Dorsolateral prefrontal cortex (tissue), 120 donors: ENCODE measurements at regions of chr10 and their contacts with region 1.

Region 1: GRCh38 chr10:118669020-118669791 is 73.8 kb upstream of the PRLHR start:
- DNase-seq: peak in 6 of 10 donors; percentile 61 to 81 (median 68)
- H3K4me3 ChIP-seq: peak overlapping the region in 51 of 59 donors; percentile 3 to 61 (median 29)
- H3K27ac ChIP-seq: peak overlapping the region in 33 of 59 donors; percentile 2 to 84 (median 62)
- H3K27me3 ChIP-seq: peaks cover 0 to 11% (median 0%) of the 10 kb centered on the region in 45 donors
- CTCF ChIP-seq: peak in 1 of 56 donors; percentile 9

Region 2: DNA sequence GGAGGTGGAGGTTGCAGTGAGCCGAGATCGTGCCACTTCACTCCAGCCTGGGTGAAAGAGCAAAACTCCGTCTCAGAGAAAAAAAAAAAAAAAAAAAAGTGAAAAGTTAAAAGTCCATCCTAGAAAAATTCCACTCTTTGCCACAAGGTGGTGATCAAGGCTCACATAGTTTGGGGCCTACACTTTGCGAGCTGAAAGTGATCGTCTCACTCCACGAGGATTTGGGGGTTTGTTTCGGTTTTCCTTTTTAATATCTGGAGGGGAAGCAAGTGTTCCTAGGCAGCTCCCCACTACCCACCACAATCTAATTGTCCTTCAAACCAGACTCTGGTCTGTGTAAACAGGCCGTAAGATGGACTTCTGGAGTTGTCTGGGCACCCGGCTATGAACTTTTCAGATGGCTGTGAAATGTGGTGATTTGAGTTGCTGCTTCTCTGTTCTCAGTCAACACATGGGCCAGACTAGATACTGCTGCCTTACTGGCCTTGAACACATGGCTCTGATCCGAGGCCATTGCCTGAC is 100.8 kb before region 1 on chr10:
- intact Hi-C with region 1: loop called in 1 of 2 experiments (anchors 5 kb)
- DNase-seq: no peak
- H3K4me3 ChIP-seq: peak overlapping the region in 6 of 59 donors; percentile 18 to 39 (median 26)
- H3K27ac ChIP-seq: peak overlapping the region in 3 of 59 donors; percentile 17 to 74 (median 47)
- H3K27me3 ChIP-seq: peaks cover 0 to 3% (median 0%) of the 10 kb centered on the region in 45 donors
- CTCF ChIP-seq: peak; percentile 69 to 94 (median 84)

Region 3: GRCh38 chr10:118594392-118595063 is 74.7 kb before region 1 on chr10:
- intact Hi-C with region 1: loop called in 1 of 2 experiments (anchors 5 kb)
- DNase-seq: peak in 4 of 10 donors; percentile 20 to 36 (median 26)
- H3K4me3 ChIP-seq: peak overlapping the region in 32 of 59 donors; percentile 5 to 59 (median 44)
- H3K27ac ChIP-seq: no peak overlapping the region
- H3K27me3 ChIP-seq: peaks cover 8 to 85% (median 56%) of the 10 kb centered on the region in 45 donors
- CTCF ChIP-seq: peak in 52 of 56 donors; percentile 22 to 69 (median 52)

Region 4: GRCh38 chr10:118911361-118911760 is 242.2 kb after region 1 on chr10:
- intact Hi-C with region 1: no loop called
- DNase-seq: no peak
- H3K4me3 ChIP-seq: no peak overlapping the region
- H3K27ac ChIP-seq: no peak overlapping the region
- H3K27me3 ChIP-seq: peaks cover 0 to 5% (median 0%) of the 10 kb centered on the region in 45 donors
- CTCF ChIP-seq: no peak